Activated T-helper 2 cell treated with anti-CD3 and anti-CD28 coated beads, Interferon-gamma antibody, Interleukin-2, Interleukin-4, amounts not matched to agents 10 μg/mL and 5 μg/mL and 100 μg/mL, durations not matched to agents 14 hours and 24 hours and 36 hours (primary cell): ENCODE measurements at regions of chr11 and their contacts with region 1.

Region 1: DNA sequence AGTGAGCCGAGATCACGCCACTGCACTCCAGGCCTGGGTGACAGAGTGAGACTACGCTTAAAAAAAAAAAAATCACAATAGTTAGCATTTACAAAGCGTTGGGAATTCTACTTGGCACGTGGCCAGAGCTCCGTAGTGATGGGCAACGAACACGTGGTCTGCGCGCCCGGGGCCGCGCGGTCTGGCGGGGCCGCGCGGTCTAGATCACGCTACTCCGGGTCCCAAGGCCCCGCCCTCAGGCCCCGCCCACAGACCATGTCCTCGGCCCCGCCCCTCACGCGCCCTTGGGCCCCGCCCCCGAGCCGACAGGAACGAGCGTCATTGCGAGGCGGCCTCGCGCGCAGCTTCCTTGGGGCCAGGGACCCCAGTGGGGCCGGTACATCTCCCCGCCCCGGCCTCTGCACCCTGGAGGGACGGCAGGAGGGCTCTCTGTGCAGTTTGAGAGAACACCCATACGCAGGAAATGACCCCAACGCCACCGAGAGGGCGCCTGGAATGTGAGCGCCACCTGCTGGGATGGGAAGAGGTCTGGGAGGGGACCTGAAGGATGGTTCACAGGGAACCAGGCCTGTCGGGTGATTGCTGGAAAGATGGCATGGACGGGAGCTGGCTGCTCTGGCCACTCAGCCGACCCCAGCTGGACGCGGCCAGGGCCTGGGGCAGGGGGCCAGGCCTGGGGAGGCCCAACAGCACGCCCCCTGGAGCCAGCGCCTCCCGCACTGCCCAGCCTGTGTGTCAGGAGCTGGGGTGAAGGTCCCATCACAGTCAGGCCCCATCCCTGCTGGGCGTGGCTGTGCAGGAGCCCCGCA is 2.0 kb upstream of the PTDSS2 start:
- DNase-seq: peak; percentile 91
- H3K4me3 Mint-ChIP-seq: peak overlapping the region; percentile 86
- H3K27ac Mint-ChIP-seq: peak overlapping the region; percentile 93
- H3K4me1 Mint-ChIP-seq: peaks cover 12% of the 10 kb centered on the region
- H3K27me3 Mint-ChIP-seq: peaks cover 3% of the 10 kb centered on the region

Region 2: GRCh38 chr11:406978-407739 is 41.0 kb before region 1 on chr11:
- intact Hi-C with region 1: loop called (anchors 1 kb)
- DNase-seq: peak; percentile 92
- H3K4me3 Mint-ChIP-seq: no peak overlapping the region
- H3K27ac Mint-ChIP-seq: no peak overlapping the region
- H3K4me1 Mint-ChIP-seq: no peaks in the 10 kb centered on the region
- H3K27me3 Mint-ChIP-seq: no peaks in the 10 kb centered on the region

Region 3: DNA sequence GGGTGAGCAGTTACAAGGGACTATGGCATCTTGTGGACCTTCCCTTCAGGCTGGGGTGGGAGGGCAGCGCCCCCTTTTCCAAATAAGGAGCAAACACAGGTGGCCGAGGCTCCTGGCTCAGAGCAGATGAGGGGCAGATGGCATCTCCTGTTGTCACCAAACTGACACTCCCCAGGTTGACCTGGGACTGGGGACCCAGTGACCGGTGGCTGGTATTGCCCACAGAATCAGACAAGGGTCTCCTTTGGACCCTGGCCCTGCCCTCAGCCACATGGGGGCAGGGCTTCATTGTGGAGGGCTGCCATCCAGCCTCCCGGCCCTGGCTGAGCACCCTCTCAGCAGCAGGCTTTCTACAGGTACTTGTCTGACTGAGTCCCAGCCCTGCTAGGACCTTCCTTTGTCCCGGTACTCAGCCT is 32.5 kb before region 1 on chr11:
- intact Hi-C with region 1: loop called (anchors 1 kb)
- DNase-seq: no peak
- H3K4me3 Mint-ChIP-seq: peak overlapping the region; percentile 93
- H3K27ac Mint-ChIP-seq: peak overlapping the region; percentile 90
- H3K4me1 Mint-ChIP-seq: peaks cover 15% of the 10 kb centered on the region
- H3K27me3 Mint-ChIP-seq: no peaks in the 10 kb centered on the region

Region 4: DNA sequence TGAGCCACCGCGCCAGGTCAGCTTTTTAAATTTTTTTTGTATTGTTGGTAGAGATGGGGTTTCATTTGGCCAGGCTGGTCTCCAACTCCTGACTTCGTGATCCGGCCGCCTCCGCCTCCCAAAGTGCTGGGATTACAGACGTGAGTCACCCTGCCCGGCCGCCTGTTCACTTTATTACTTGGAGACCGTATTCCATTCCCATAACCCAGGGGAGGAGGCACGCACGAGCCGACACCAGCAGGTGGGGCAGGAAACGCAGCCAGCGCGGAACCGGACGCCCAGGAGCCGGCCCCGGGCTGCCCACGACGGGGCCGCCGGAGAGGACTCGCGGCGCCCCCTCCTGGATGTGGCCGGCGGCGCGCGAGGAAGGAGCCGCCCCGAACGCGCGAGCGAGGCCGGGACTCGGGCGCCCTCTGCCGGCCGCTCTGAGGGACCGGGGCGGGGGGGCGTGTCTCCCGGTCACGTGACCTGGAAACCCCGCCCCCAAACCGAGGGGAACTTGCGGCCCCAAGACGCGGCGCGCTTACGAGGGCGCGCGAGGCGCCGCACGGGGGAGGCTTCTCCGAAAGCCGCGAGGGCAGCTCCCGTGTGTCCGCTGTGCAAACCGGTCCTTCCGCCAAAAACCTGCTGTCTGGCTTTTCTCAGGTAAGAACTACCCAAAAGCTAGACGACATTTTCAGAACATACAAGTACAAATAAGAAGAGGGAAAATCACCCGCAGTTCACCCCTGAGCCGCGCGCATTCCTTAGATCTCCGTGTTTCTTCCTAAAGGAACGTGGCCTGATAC is 70.5 kb after region 1 on chr11:
- intact Hi-C with region 1: loop called (anchors 1 kb)
- DNase-seq: peak; percentile 80
- H3K4me3 Mint-ChIP-seq: peak overlapping the region; percentile 74
- H3K27ac Mint-ChIP-seq: peak overlapping the region; percentile 60
- H3K4me1 Mint-ChIP-seq: peaks cover 3% of the 10 kb centered on the region
- H3K27me3 Mint-ChIP-seq: no peaks in the 10 kb centered on the region